ENCODE measurements at regions of chr6 and their contacts with region 1.

Region 1: GRCh38 chr6:4135665-4136353 is 434 bp upstream of the ECI2 start:
- DNase-seq: peak; percentile 90 to 99 (median 94)
- ATAC-seq: peak; percentile 87
- H3K4me3 ChIP-seq: peak overlapping the region; percentile 82
- H3K4me3 Mint-ChIP-seq: peak overlapping the region; percentile 86
- H3K27ac ChIP-seq: peak overlapping the region; percentile 47 to 62
- H3K27ac Mint-ChIP-seq: peak overlapping the region; percentile 97
- H3K4me1 ChIP-seq: peaks cover 22% of the 10 kb centered on the region
- H3K4me1 Mint-ChIP-seq: peaks cover 50% of the 10 kb centered on the region
- H3K27me3 ChIP-seq: no peaks in the 10 kb centered on the region
- H3K27me3 Mint-ChIP-seq: no peaks in the 10 kb centered on the region
- CTCF ChIP-seq: no peak

Region 2: GRCh38 chr6:3118353-3119039 is 1017.3 kb before region 1 on chr6 and contains the start of gene BPHL:
- CTCF ChIA-PET with region 1: no interaction called
- POLR2A ChIA-PET with region 1: no interaction called
- intact Hi-C with region 1: loop called in 1 of 2 experiments (anchors 5 kb)
- DNase-seq: peak; percentile 98 to 100 (median 99)
- ATAC-seq: peak; percentile 90
- H3K4me3 ChIP-seq: peak within 1 kb of the TSS; percentile 67
- H3K4me3 Mint-ChIP-seq: peak within 1 kb of the TSS; percentile 93
- H3K27ac ChIP-seq: peak within 1 kb of the TSS; percentile 91 to 96
- H3K27ac Mint-ChIP-seq: peak within 1 kb of the TSS; percentile 91
- H3K4me1 ChIP-seq: peaks cover 15% of the 10 kb centered on the region
- H3K4me1 Mint-ChIP-seq: peaks cover 19% of the 10 kb centered on the region
- H3K27me3 ChIP-seq: no peaks in the 10 kb centered on the region
- H3K27me3 Mint-ChIP-seq: no peaks in the 10 kb centered on the region
- CTCF ChIP-seq: no peak
- total RNA-seq, gene BPHL: 5.2 to 5.7 TPM

Region 3: DNA sequence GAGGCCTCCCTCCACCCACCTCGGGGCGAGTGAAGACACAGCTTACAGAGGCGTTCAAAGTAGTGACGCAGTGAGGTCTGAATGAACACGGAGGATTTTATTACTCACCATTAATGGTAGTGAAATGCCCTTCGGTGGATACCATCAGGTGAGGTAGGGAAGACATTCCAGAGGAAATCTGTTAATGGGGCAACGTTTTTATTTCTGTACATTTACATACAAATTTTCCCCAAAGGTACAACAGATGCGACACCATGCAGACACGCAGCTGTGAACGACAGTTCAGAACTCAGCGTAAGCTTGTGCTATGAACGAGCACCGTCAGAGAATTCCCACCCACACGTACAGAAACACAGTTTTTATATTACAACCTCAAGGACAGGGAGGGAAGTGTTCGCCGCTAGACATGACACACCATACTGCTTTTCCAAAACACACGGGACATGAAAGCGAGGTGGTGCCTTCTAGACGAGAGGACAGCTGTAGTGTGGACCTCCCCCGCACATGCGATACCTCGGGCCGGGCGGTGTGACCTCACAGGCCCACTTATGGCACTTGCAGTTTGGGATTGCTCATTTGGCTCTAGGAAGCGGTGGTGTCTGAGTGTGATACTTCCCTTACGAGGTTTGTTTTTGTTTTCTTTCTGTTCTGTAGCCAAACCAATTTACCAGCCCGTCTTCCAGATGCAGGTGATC is 866.4 kb before region 1 on chr6:
- CTCF ChIA-PET with region 1: no interaction called
- POLR2A ChIA-PET with region 1: no interaction called
- intact Hi-C with region 1: loop called in 1 of 2 experiments (anchors 10 kb)
- DNase-seq: peak in 2 of 14 experiments; percentile 40 to 48
- ATAC-seq: peak; percentile 39
- H3K4me3 ChIP-seq: no peak overlapping the region
- H3K4me3 Mint-ChIP-seq: no peak overlapping the region
- H3K27ac ChIP-seq: no peak overlapping the region
- H3K27ac Mint-ChIP-seq: no peak overlapping the region
- H3K4me1 ChIP-seq: peaks cover 12% of the 10 kb centered on the region
- H3K4me1 Mint-ChIP-seq: peaks cover 48% of the 10 kb centered on the region
- H3K27me3 ChIP-seq: no peaks in the 10 kb centered on the region
- H3K27me3 Mint-ChIP-seq: no peaks in the 10 kb centered on the region
- CTCF ChIP-seq: no peak

Region 4: DNA sequence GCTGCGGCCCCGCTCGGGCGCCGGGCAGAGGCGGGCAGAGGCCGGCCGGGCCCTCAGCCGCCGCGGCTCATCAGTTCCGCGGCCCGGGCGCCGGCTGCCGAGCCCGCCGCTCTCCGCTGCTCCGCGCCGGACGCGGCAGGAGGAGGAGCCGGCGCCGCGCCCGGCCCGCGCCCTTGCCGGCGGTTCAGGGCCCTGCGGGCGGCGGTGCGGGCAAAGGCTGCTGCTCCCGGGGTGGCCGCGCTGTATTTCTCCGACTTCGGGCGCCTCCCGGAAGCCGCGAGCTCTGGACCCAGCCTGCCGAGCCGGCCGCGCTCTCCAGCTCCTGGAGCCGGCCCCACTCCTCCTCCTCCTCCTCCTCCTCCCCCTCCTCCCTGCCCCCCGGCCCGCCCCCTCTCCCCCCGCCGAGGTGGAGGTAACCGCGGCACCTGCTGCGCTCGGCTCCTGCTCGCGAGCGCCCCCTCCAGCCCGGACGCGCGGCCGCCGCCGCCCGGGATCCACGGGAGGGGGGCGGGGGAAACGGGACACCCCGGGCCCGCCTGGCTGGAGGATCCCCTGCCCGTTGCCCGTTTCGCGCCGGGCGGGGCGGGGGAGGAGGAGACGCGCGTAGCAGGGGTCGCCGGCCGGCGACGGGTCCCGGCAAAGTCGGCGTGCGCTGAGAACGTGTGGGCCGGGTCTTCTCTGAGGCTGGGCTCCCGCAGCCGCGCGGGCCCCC is 678.9 kb before region 1 on chr6 and contains the start of gene SLC22A23:
- CTCF ChIA-PET with region 1: no interaction called
- POLR2A ChIA-PET with region 1: no interaction called
- intact Hi-C with region 1: loop called in 1 of 2 experiments (anchors 5 kb)
- DNase-seq: peak; percentile 63 to 91 (median 77)
- ATAC-seq: peak; percentile 52
- H3K4me3 ChIP-seq: peak within 1 kb of the TSS; percentile 72
- H3K4me3 Mint-ChIP-seq: peak within 1 kb of the TSS; percentile 89
- H3K27ac ChIP-seq: no peak within 1 kb of the TSS
- H3K27ac Mint-ChIP-seq: peak within 1 kb of the TSS; percentile 63
- H3K4me1 ChIP-seq: peaks cover 36% of the 10 kb centered on the region
- H3K4me1 Mint-ChIP-seq: peaks cover 7% of the 10 kb centered on the region
- H3K27me3 ChIP-seq: peaks cover 6 to 15% of the 10 kb centered on the region in 2 experiments
- H3K27me3 Mint-ChIP-seq: peaks cover 15% of the 10 kb centered on the region
- CTCF ChIP-seq: peak; percentile 79
- total RNA-seq, gene SLC22A23: 13.4 to 13.6 TPM

Region 5: DNA sequence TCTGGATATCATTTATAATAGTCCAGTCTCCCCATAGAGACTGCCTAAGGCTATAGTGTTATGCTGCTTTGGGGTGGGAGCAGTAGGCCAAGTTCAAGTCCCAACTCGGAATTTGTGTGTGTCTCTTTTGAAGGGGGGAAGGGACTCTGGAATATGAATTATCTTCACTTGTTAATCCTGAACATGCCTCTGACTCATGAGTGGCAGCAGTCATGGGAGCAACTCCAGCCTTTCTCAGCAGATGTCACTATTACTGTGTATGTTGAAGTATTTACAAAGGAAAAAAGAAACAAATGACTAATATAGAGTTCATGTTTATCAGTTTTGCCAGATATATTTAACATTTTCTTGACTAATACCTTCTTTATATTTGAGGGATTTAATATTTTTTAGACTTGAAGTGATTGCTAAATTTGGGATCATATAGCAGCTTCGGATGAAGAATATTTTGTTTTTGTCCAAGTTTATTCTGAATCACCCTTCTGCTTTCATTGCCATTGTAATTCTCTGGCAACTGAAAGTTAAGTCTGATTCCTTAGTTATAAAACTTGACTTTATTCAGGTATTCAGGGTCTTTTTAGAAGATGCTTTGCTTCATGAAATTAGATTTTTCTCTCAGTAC is 80.3 kb before region 1 on chr6:
- CTCF ChIA-PET with region 1: interaction called, 3 read pairs
- POLR2A ChIA-PET with region 1: no interaction called
- intact Hi-C with region 1: loop called in 1 of 2 experiments (anchors 1 kb)
- DNase-seq: peak in 4 of 14 experiments; percentile 11 to 28 (median 28)
- ATAC-seq: no peak
- H3K4me3 ChIP-seq: no peak overlapping the region
- H3K4me3 Mint-ChIP-seq: no peak overlapping the region
- H3K27ac ChIP-seq: no peak overlapping the region
- H3K27ac Mint-ChIP-seq: no peak overlapping the region
- H3K4me1 ChIP-seq: peaks cover 5% of the 10 kb centered on the region
- H3K4me1 Mint-ChIP-seq: peaks cover 31% of the 10 kb centered on the region
- H3K27me3 ChIP-seq: no peaks in the 10 kb centered on the region
- H3K27me3 Mint-ChIP-seq: no peaks in the 10 kb centered on the region
- CTCF ChIP-seq: no peak

Region 6: DNA sequence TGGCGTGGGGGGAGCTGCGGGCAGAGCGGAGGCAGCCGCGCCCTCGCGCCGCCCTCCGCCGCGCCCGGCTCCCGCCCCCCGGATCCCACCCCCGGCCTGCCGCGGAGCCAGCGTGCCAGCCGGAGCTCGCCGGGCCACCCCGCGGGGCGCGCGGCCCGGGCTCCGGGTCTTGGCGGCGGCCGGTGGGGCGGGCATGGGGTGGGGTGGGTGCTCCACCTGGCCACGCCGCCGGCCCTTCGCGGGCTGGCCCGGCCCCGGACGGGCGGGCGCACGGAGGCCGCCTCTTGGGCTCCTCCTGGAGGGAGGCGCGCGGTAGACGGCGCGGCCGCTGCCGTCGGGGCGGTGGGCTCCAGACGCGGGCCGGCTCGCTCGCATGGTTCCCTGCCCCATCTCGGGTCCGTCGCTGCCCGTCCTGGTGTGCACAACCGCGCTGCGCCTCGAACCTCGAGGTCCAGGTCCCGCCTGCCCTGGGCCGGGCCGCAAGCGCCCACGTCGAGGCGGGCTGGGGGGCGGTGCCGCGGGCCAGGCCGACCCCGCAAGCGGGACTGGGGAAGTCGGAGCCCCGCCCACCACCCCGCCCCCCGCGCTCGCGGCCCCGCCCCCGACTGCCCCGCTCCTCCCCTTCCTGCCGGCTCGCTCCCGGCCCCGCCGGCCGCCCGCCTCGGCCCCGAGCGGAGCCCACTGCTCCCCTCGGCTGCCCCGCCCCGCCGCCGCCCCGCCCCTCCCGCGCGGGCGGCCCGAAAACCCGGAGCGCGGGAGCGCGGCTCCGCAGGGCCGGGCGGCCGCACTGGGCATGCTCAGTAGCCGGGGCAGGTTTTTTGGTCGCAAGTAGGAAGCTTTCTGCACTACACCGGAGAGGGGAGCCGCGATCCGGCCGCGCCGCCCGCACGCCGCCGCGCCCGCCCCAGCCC is 640.0 kb after region 1 on chr6 and contains the start of gene CDYL:
- CTCF ChIA-PET with region 1: no interaction called
- POLR2A ChIA-PET with region 1: no interaction called
- intact Hi-C with region 1: loop called in 1 of 2 experiments (anchors 5 kb)
- DNase-seq: peak; percentile 73 to 95 (median 88)
- ATAC-seq: peak; percentile 73
- H3K4me3 ChIP-seq: peak within 1 kb of the TSS; percentile 81
- H3K4me3 Mint-ChIP-seq: peak within 1 kb of the TSS; percentile 98
- H3K27ac ChIP-seq: no peak within 1 kb of the TSS
- H3K27ac Mint-ChIP-seq: peak within 1 kb of the TSS; percentile 87
- H3K4me1 ChIP-seq: peaks cover 18% of the 10 kb centered on the region
- H3K4me1 Mint-ChIP-seq: peaks cover 46% of the 10 kb centered on the region
- H3K27me3 ChIP-seq: no peaks in the 10 kb centered on the region
- H3K27me3 Mint-ChIP-seq: no peaks in the 10 kb centered on the region
- CTCF ChIP-seq: no peak
- total RNA-seq, gene CDYL: 23.8 to 23.9 TPM

Region 7: GRCh38 chr6:5260661-5261544 is 1125.1 kb after region 1 on chr6 and contains the starts of genes FARS2 and LYRM4:
- CTCF ChIA-PET with region 1: no interaction called
- POLR2A ChIA-PET with region 1: interaction called, 4 read pairs
- intact Hi-C with region 1: loop called in 1 of 2 experiments (anchors 10 kb)
- DNase-seq: peak; percentile 86 to 96 (median 89)
- ATAC-seq: peak; percentile 75
- H3K4me3 ChIP-seq: peak within 1 kb of the TSS; percentile 86
- H3K4me3 Mint-ChIP-seq: peak within 1 kb of the TSS; percentile 98
- H3K27ac ChIP-seq: peak within 1 kb of the TSS; percentile 98
- H3K27ac Mint-ChIP-seq: peak within 1 kb of the TSS; percentile 100
- H3K4me1 ChIP-seq: peaks cover 13% of the 10 kb centered on the region
- H3K4me1 Mint-ChIP-seq: peaks cover 38% of the 10 kb centered on the region
- H3K27me3 ChIP-seq: no peaks in the 10 kb centered on the region
- H3K27me3 Mint-ChIP-seq: no peaks in the 10 kb centered on the region
- CTCF ChIP-seq: no peak
- total RNA-seq, gene FARS2: 12.6 to 12.8 TPM
- total RNA-seq, gene LYRM4: 24.8 to 28.1 TPM